Tibial artery (tissue), 4 donors: ENCODE measurements at regions of chr5 and their contacts with region 1.

Region 1: GRCh38 chr5:151115274-151115905 is 34.6 kb upstream of the TNIP1 start:
- DNase-seq: peak; percentile 79 to 83
- H3K4me3 ChIP-seq: no peak overlapping the region
- H3K27ac ChIP-seq: no peak overlapping the region
- H3K4me1 ChIP-seq: no peaks in the 10 kb centered on the region
- H3K27me3 ChIP-seq: no peaks in the 10 kb centered on the region
- CTCF ChIP-seq: peak; percentile 94 to 96

Region 2: GRCh38 chr5:151002250-151002649 is 113.1 kb before region 1 on chr5:
- intact Hi-C with region 1: loop called (anchors 5 kb)
- DNase-seq: no peak
- H3K4me3 ChIP-seq: no peak overlapping the region
- H3K27ac ChIP-seq: no peak overlapping the region
- H3K4me1 ChIP-seq: peaks cover 0 to 40% (median 33%) of the 10 kb centered on the region in 4 donors
- H3K27me3 ChIP-seq: no peaks in the 10 kb centered on the region
- CTCF ChIP-seq: peak; percentile 62 to 78

Region 3: DNA sequence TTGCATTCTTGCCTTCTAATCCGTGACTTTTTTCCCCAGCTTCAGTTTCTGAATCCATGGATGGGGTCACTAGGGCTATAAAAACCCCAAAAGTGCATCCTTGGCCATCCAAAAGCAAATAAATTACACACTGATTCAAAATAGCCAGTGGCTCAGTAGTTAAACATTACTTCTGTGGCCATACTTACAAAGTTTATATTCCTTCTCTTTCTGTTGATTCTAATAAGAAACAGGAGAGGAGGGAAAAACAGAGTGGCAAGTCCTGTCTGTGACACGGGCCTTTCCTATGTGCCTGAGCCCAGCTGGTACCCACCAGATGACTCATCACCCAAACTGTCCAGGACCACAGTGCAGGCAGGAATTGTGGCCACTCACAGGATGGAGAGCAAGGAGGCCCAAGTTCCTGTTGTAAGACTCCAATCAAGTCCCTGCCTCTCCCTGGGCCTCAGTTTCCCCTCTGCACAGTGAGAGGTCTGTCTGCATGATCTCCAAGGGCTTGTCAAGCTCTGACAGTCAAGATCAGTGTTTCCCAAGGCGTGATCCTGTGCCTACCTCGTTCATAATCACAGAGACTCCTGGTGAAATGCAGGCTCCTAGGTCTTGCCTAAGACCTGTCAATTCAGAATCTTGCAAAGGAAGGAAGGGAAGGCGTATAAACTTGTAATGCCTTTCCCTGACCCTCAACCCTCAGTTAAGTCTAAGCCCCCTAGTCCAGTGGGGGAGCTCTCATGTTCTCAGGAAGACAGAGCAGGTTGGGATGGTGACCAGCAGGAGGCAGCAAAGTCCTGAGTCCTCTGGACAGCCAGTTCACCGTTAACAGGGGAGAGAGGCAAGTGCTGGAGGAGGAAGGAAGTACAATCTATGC is 64.1 kb before region 1 on chr5:
- intact Hi-C with region 1: loop called (anchors 2 kb)
- DNase-seq: peak; percentile 79 to 88
- H3K4me3 ChIP-seq: no peak overlapping the region
- H3K27ac ChIP-seq: no peak overlapping the region
- H3K4me1 ChIP-seq: peaks cover 0 to 7% (median 3%) of the 10 kb centered on the region in 4 donors
- H3K27me3 ChIP-seq: no peaks in the 10 kb centered on the region
- CTCF ChIP-seq: peak; percentile 82 to 90